ENCODE measurements at regions of chr16 and their contacts with region 1.

Region 1: DNA sequence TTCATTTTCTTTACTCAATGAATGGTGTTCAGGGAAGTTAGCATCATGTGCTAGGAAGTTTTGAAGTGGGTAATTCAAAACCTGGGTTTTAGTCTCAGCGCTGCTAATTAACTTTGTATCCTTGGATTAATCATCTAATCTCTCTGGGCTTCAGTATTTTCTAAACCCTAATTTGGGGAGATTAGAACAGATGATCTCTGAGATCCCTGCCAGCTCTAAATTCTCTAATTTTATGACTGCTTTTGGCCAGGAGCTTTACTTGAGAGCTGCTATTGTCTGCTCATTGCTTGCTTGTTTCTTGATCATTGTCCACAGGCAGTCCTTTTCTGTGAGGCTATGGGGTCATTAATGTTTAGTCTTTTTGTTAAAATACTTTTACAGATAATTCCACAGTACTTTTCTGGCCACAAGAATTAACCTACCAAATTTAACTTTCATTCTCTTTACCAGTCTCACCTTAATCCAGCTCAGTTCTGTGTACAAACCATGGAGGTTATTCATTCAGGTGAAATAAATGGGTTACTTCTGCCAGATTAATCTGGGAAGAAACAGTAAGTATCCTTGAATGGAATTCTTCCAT is 28.4 kb upstream of the VWA3A start:
- DNase-seq: no peak
- ATAC-seq: no peak
- H3K4me3 ChIP-seq: no peak overlapping the region
- H3K27ac ChIP-seq: no peak overlapping the region
- H3K4me1 ChIP-seq: no peaks in the 10 kb centered on the region
- H3K27me3 ChIP-seq: no peaks in the 10 kb centered on the region
- CTCF ChIP-seq: no peak

Region 2: DNA sequence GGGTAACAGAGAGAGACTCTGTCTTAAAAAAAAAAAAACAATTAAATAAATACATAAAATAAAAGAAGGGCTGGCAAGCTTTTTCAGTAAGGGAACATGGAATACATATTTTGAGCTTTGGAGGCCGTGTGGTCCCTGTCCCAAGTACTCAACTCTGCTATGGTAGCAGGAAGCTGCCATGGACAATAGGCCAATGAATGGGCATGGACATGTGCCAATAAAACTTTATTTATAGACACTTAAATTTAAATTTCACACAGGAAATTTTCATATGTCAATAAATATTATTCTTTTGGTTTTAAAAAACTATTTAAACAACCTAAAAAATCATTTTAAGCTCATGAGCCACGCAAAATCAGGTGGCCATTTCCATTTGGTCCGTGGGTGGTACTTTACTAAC is 396.4 kb before region 1 on chr16:
- intact Hi-C with region 1: no loop called
- DNase-seq: no peak
- ATAC-seq: no peak
- H3K4me3 ChIP-seq: no peak overlapping the region
- H3K27ac ChIP-seq: no peak overlapping the region
- H3K4me1 ChIP-seq: peaks cover 0 to 10% (median 0%) of the 10 kb centered on the region in 9 donors
- H3K27me3 ChIP-seq: peaks cover 0 to 30% (median 19%) of the 10 kb centered on the region in 7 donors
- CTCF ChIP-seq: no peak

Region 3: DNA sequence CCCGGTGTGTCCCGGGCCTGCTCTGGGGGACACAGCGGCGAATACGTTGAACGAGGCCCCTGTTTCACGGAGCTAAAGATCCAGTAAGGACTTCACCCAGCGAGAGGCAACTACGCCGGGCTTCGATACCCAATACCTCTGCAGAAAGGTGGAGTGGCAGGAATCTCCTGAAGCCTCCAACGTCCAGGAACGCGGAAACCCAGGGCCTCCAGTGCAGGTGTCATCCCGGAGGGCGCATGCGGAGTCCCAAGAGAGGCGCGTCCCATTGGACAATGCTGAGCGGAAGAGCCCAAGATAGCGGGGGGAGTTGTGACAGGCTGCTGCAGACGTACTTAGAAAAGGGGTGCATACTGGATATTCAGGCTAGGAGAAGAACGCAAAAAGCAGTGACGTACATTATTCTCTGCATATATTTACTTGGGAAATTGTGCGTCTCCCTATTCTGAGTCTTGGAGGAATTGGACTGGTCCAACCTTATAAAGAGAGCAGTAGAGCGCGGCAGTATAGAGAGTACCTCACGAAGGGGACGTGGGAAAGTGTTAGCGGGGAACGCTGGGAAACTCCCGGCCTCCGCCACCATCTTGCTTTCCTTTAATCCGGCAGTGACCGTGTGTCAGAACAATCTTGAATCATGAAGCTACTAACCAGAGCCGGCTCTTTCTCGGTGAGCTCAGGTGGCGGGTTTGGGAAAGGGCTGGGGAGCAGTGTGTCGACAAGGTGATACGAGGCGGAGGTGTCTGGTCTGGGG is 111.0 kb before region 1 on chr16 and contains the start of gene UQCRC2:
- intact Hi-C with region 1: no loop called
- DNase-seq: peak; percentile 85 to 93
- ATAC-seq: peak; percentile 95 to 98 (median 97)
- H3K4me3 ChIP-seq: peak within 1 kb of the TSS; percentile 78 to 98 (median 88)
- H3K27ac ChIP-seq: peak within 1 kb of the TSS; percentile 86 to 99 (median 96)
- H3K4me1 ChIP-seq: peaks cover 3 to 70% (median 50%) of the 10 kb centered on the region in 9 donors
- H3K27me3 ChIP-seq: no peaks in the 10 kb centered on the region
- CTCF ChIP-seq: no peak
- total RNA-seq, gene UQCRC2: 648 to 1,183 (median 997) TPM

Region 4: DNA sequence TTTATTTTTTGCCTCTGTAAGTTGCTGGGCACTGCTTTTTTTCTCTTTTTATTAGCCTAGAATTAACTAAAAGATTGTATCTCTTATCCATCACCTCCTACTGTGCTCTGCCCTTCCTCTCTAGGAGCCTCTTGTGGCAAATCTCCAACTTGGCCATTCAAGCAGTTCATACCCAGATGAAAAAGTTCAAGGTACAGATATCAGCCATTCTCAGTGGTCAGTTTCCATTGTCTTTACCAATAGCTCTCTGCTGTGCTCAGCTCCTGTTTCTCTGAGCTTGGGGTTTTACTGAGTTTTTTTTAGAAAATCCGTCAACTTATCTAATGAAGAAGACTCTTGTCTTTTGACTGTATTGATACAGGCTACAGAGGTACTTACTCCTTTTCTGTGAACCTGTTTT is 40.5 kb before region 1 on chr16:
- intact Hi-C with region 1: loop called in 1 of 10 experiments (anchors 5 kb)
- DNase-seq: no peak
- ATAC-seq: no peak
- H3K4me3 ChIP-seq: no peak overlapping the region
- H3K27ac ChIP-seq: no peak overlapping the region
- H3K4me1 ChIP-seq: peaks cover 0 to 31% (median 10%) of the 10 kb centered on the region in 9 donors
- H3K27me3 ChIP-seq: no peaks in the 10 kb centered on the region
- CTCF ChIP-seq: no peak